ENCODE measurements at regions of chr11 and their contacts with region 1.

Region 1: GRCh38 chr11:120511116-120511819 is at the start of gene GRIK4:
- DNase-seq: peak; percentile 84
- H3K4me3 ChIP-seq: peak within 1 kb of the TSS; percentile 64
- H3K27ac ChIP-seq: no peak within 1 kb of the TSS
- H3K4me1 ChIP-seq: no peaks in the 10 kb centered on the region
- H3K27me3 ChIP-seq: peaks cover 85% of the 10 kb centered on the region
- CTCF ChIP-seq: peak; percentile 91
- total RNA-seq, gene GRIK4: 0.16 TPM

Region 2: DNA sequence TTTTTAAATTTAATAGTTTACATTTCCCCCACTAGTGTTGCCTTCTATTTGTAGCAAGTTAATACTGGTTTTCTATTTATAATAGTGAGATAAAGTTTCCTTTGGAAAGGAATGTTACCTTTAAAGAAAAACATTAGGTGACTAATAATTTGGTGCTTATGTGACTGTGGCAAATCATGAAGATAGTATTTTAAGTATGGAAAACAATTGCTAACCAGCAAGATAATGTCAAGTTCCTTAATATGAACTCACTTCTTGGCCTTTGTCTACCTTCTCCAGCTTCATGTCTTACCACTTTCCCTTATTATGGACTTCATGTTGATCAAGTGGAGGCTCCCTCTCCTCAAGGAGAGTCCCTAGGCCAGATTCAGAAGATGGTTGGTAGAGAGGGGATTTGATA is 147.8 kb before region 1 on chr11:
- intact Hi-C with region 1: no loop called
- DNase-seq: no peak
- H3K4me3 ChIP-seq: no peak overlapping the region
- H3K27ac ChIP-seq: peak overlapping the region; percentile 21
- H3K4me1 ChIP-seq: peaks cover 80% of the 10 kb centered on the region
- H3K27me3 ChIP-seq: no peaks in the 10 kb centered on the region
- CTCF ChIP-seq: no peak

Region 3: DNA sequence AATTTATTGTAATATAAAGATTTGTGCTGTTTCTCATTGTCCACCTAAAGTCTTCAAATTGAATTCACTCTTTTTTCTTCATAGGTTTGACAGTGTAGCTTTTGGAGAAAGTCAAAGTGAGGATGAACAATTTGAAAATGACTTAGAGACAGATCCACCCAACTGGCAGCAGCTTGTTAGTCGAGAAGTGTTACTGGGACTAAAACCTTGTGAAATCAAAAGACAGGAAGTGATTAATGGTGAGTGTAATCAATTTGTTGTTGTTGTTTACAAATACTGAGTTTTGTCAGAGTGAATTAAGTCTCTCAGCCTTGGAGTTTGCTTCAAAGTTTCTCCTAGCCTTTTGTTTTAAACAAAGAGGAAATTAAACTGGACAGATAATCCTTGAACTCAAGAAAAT is 53.3 kb before region 1 on chr11:
- intact Hi-C with region 1: no loop called
- DNase-seq: no peak
- H3K4me3 ChIP-seq: no peak overlapping the region
- H3K27ac ChIP-seq: no peak overlapping the region
- H3K4me1 ChIP-seq: peaks cover 12% of the 10 kb centered on the region
- H3K27me3 ChIP-seq: no peaks in the 10 kb centered on the region
- CTCF ChIP-seq: no peak

Region 4: GRCh38 chr11:120590472-120590871 is 79.2 kb after region 1 on chr11:
- intact Hi-C with region 1: no loop called
- DNase-seq: no peak
- H3K4me3 ChIP-seq: no peak overlapping the region
- H3K27ac ChIP-seq: no peak overlapping the region
- H3K4me1 ChIP-seq: no peaks in the 10 kb centered on the region
- H3K27me3 ChIP-seq: peaks cover 73% of the 10 kb centered on the region
- CTCF ChIP-seq: no peak

Region 5: GRCh38 chr11:120688163-120688562 is 176.9 kb after region 1 on chr11:
- intact Hi-C with region 1: loop called (anchors 5 kb)
- DNase-seq: no peak
- H3K4me3 ChIP-seq: no peak overlapping the region
- H3K27ac ChIP-seq: no peak overlapping the region
- H3K4me1 ChIP-seq: no peaks in the 10 kb centered on the region
- H3K27me3 ChIP-seq: peaks cover 84% of the 10 kb centered on the region
- CTCF ChIP-seq: no peak

Region 6: GRCh38 chr11:120952461-120953434 is 441.5 kb after region 1 on chr11:
- intact Hi-C with region 1: loop called (anchors 10 kb)
- DNase-seq: peak; percentile 64
- H3K4me3 ChIP-seq: peak overlapping the region; percentile 44
- H3K27ac ChIP-seq: no peak overlapping the region
- H3K4me1 ChIP-seq: peaks cover 12% of the 10 kb centered on the region
- H3K27me3 ChIP-seq: peaks cover 22% of the 10 kb centered on the region
- CTCF ChIP-seq: peak; percentile 76

Region 7: DNA sequence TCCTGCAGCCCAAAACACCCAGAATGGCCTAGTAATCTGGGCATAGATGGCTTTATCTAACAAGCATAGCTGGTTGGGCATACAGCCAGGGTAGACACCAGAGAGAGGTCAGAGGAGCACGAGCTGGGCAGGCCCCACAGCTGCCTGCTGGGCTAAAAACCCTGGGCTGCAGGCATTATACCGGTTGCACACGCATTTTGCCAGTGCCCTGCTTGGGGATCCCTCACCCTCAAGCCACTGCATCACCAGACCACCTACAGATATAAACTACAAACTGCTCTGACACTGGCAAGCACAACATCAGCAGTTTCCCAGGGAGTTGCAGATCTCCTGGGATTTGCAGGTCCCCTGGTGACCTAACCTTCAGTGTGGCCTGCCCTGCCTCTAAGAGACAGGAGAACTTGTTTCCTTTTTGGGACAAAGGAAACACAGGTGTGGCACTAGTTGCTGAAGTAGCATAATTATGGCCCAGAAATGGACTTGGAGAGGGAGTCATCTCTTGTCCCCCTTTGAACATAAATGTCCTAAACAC is 702.2 kb after region 1 on chr11:
- intact Hi-C with region 1: no loop called
- DNase-seq: no peak
- H3K4me3 ChIP-seq: no peak overlapping the region
- H3K27ac ChIP-seq: no peak overlapping the region
- H3K4me1 ChIP-seq: peaks cover 9% of the 10 kb centered on the region
- H3K27me3 ChIP-seq: peaks cover 13% of the 10 kb centered on the region
- CTCF ChIP-seq: no peak